Activated naive CD4-positive, alpha-beta T cell treated with anti-CD3 and anti-CD28 coated beads for 36 hours (primary cell): ENCODE measurements at regions of chr17 and their contacts with region 1.

Region 1: DNA sequence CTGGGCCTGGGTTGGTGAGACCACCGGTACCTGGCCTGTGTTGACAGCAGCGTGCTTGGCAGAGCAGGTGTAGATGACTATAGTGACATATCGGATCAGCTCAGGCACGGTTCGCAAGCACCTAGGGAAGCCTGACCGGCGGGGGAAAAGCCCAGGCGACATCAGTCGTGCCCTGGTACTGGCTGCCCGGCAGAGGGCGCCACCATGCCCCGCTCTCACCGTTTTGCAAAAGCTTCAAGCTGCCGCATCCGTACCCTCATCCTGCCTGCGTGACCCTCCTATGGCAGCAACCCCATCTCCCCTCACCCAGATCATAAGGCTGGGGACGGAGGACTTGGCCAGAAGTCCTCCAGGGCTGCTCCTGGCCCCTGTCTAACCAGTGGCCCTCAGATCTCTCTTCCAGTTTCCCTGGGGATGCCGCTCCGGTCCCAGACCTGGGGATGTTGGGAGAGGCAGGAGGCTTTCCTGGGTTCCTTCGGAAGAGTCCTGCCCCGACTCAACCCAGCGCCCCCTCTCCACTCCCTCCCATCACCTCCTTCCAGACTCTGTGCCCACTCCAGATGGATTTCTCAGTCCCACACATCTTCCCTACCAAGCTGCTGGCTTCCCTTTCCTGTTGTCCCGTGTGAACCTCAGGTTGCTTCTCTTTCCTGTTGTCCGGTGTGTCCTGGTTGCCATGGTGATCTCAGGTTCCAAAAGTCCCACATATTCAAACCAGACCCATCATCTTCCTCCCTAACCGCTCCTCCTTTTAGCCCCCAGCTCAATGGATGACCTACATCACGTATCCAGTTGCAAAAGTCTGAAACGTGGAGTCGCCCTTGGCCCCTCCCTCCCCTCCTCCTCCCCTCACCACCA is 13.7 kb downstream of the ALOX12B start:
- DNase-seq: peak; percentile 93
- H3K4me3 Mint-ChIP-seq: peak overlapping the region; percentile 75
- H3K27ac Mint-ChIP-seq: no peak overlapping the region
- H3K4me1 Mint-ChIP-seq: peaks cover 16% of the 10 kb centered on the region
- H3K27me3 Mint-ChIP-seq: peaks cover 28% of the 10 kb centered on the region

Region 2: GRCh38 chr17:8091033-8091687 is 17.3 kb after region 1 on chr17:
- CTCF ChIA-PET with region 1: interaction called, 19 read pairs
- intact Hi-C with region 1: no loop called
- DNase-seq: no peak
- H3K4me3 Mint-ChIP-seq: no peak overlapping the region
- H3K27ac Mint-ChIP-seq: no peak overlapping the region
- H3K4me1 Mint-ChIP-seq: peaks cover 8% of the 10 kb centered on the region
- H3K27me3 Mint-ChIP-seq: peaks cover 15% of the 10 kb centered on the region

Region 3: DNA sequence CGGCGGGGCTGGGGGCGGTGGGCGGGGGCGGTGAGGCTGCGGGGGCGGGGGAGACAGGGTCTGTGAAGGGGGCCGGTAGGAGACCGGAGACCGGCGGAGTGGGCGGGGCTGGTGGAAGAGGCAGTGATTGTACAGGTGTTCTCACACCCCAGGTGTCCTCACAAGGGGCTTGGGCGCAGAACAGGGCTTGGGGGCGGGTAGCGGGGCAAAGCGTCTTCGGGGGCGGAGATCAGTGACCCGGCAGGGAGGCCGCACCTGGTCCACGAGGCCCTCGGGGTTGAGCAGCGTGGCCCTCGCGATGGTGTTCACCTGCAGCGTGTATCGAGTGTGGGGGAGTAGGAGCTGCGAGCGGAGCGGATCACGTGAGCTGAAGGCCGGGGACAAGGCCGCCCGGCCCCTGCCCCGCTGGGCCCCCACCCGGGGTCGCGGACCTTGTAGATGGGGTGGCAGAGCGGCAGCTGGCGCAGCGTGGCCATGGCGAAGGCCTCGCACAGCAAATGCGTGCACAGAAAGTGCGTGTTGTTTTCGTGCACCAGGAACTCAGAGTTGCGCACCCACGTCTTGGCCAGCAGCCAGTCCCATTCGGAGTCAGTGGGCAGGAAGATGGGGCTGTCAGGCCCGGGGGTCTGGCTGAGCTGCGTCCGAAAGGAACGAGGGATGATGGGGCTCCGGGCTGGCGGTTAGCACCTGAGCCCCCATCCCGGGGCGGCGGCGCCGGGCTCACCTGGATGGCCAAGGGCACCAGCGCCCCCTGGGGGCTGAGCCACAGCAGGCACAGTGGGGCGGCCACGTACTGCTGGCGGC is 36.0 kb after region 1 on chr17:
- CTCF ChIA-PET with region 1: interaction called, 20 read pairs
- intact Hi-C with region 1: loop called (anchors 1 kb)
- DNase-seq: peak; percentile 81
- H3K4me3 Mint-ChIP-seq: peak overlapping the region; percentile 34
- H3K27ac Mint-ChIP-seq: no peak overlapping the region
- H3K4me1 Mint-ChIP-seq: peaks cover 2% of the 10 kb centered on the region
- H3K27me3 Mint-ChIP-seq: peaks cover 6% of the 10 kb centered on the region

Region 4: GRCh38 chr17:8173056-8173870 is 99.4 kb after region 1 on chr17:
- CTCF ChIA-PET with region 1: no interaction called
- intact Hi-C with region 1: loop called (anchors 5 kb)
- DNase-seq: peak; percentile 90
- H3K4me3 Mint-ChIP-seq: peak overlapping the region; percentile 69
- H3K27ac Mint-ChIP-seq: peak overlapping the region; percentile 100
- H3K4me1 Mint-ChIP-seq: peaks cover 40% of the 10 kb centered on the region
- H3K27me3 Mint-ChIP-seq: peaks cover 4% of the 10 kb centered on the region